PC-9 (cell line): ENCODE measurements at regions of chr22 and their contacts with region 1.

Region 1: GRCh38 chr22:28992565-28993356 is 68.9 kb downstream of the C22orf31 start:
- DNase-seq: no peak
- H3K4me3 ChIP-seq: no peak overlapping the region
- H3K27ac ChIP-seq: no peak overlapping the region
- H3K4me1 ChIP-seq: no peaks in the 10 kb centered on the region
- H3K27me3 ChIP-seq: no peaks in the 10 kb centered on the region
- CTCF ChIP-seq: no peak

Region 2: DNA sequence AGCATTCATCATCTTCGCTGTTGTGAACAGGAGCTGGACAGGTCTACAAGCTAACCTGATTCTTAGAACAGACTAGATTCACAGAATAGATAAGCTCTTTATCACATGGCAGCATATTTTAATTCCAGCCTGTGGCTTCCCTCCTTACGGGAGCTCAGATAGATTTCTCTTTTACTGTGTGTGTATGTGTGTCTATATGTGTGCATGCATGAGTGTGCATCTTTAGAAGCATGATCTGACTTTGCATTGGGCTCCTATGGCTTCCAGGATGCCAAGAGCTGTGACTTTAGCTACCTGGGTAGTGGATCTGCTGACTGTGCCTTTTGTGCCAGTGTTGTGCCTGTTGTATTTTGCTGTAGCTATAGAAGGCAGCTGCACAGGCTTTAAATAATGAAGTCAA is 65.1 kb before region 1 on chr22:
- CTCF ChIA-PET with region 1: interaction called, 12 read pairs
- POLR2A ChIA-PET with region 1: no interaction called
- intact Hi-C with region 1: no loop called
- DNase-seq: no peak
- H3K4me3 ChIP-seq: no peak overlapping the region
- H3K27ac ChIP-seq: no peak overlapping the region
- H3K4me1 ChIP-seq: no peaks in the 10 kb centered on the region
- H3K27me3 ChIP-seq: no peaks in the 10 kb centered on the region
- CTCF ChIP-seq: no peak

Region 3: GRCh38 chr22:28937206-28938025 is 55.3 kb before region 1 on chr22:
- CTCF ChIA-PET with region 1: no interaction called
- POLR2A ChIA-PET with region 1: no interaction called
- intact Hi-C with region 1: loop called (anchors 2 kb)
- DNase-seq: no peak
- H3K4me3 ChIP-seq: no peak overlapping the region
- H3K27ac ChIP-seq: no peak overlapping the region
- H3K4me1 ChIP-seq: no peaks in the 10 kb centered on the region
- H3K27me3 ChIP-seq: no peaks in the 10 kb centered on the region
- CTCF ChIP-seq: no peak

Region 4: DNA sequence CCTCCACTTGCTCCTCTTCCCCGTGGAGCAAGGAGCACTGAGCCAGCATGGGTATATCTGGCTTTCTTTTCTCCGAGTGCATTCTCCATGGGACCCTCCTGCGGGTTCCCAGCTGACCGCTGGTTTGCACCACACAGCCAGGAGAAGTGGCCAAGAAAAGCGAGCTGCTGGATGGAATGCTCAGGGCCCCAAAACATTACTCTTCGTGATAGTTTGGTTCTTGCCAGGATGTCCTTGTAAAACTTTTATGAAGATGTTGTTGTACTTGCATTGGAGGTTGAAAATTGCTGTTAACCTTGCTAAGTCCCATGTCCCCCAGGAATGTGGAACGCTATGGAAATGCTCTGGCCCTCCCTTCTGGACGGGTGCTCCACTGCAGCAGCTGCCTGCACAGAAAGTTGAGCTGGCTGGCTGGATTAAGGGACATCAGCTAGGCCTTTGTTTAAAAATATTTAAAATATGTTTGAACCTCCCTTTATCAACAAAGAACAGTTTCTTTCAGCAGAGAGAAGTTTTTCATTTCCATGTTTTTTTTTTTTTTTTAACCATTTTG is 40.7 kb before region 1 on chr22:
- CTCF ChIA-PET with region 1: no interaction called
- POLR2A ChIA-PET with region 1: no interaction called
- intact Hi-C with region 1: no loop called
- DNase-seq: peak in 1 of 2 experiments; percentile 15
- H3K4me3 ChIP-seq: no peak overlapping the region
- H3K27ac ChIP-seq: no peak overlapping the region
- H3K4me1 ChIP-seq: 0 out of 2 replicates have a peak, but pooled peaks cover 12% of the 10 kb centered on the region
- H3K27me3 ChIP-seq: no peaks in the 10 kb centered on the region
- CTCF ChIP-seq: no peak

Region 5: DNA sequence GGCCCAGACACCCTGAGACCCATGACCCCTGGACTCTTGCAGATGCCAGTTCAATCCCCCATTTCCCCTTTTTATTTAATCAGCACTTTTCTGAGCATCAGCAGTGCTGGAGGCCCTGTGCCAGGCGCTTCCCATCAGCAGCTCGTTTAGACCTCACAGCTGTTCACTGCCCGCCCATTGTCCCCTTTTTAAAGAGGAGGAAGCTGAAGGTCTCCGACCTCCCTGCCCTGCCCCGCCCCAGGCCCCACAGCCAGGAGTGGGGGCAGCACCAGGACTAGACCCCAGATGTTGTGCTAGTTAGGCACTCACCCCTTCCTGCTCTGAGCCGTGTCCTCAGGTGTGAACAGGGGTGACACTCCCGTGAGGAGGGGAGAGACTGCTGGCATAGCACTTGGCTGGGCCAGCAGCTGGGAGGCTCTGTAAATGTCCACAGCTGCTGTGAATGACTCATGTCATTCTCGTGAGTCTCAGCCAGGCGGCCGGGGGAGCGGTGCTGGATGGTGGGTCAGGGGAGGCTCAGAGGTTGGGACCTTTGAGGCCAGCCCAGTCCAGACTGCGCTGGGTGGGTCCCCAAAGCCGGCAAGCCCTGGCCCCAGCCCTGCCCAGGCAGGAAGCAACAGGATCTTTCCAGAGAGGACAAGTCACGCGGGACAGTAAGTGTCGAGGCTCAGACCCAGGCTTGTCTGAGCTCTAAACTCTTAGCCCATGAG is 232.8 kb after region 1 on chr22:
- CTCF ChIA-PET with region 1: no interaction called
- POLR2A ChIA-PET with region 1: no interaction called
- intact Hi-C with region 1: no loop called
- DNase-seq: no peak
- H3K4me3 ChIP-seq: no peak overlapping the region
- H3K27ac ChIP-seq: no peak overlapping the region
- H3K4me1 ChIP-seq: no peaks in the 10 kb centered on the region
- H3K27me3 ChIP-seq: 0 out of 2 replicates have a peak, but pooled peaks cover 7% of the 10 kb centered on the region
- CTCF ChIP-seq: no peak

Region 6: DNA sequence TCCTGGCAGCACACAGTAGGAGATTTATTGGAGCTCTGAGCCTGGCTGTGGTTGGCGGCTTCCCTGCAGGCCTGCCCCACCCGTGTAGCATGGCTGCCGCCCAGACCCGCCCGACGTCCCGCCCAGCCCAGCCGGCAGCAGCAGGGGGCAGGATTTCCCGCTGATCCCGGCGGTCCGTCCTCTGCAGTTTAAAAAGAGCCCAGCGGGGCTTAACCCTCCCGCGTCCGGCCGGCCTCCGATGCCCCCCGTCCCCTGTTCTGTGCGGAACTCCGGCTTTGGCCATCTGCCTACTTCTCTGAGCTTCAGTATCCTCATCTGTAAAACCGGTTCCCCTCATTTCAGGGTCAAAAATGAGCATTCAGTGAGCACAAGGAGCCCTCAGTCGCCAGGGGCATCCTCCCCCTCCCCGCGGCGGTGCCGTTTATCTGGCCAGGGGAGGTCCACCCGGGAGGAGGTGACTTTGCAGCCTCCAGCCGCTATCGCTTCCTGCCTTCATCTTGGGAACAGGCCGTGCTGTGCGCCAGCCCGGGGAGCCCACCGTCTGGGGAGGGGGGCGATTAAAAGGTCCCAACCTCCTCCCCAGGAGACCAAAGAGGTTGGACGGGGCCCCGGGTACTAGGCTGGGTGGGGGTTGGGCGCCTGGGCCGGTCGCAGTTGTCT is 313.5 kb after region 1 on chr22 and contains the start of gene GAS2L1:
- CTCF ChIA-PET with region 1: no interaction called
- POLR2A ChIA-PET with region 1: no interaction called
- intact Hi-C with region 1: no loop called
- DNase-seq: peak; percentile 66 to 78
- H3K4me3 ChIP-seq: peak within 1 kb of the TSS; percentile 75
- H3K27ac ChIP-seq: no peak within 1 kb of the TSS
- H3K4me1 ChIP-seq: peaks cover 26% of the 10 kb centered on the region
- H3K27me3 ChIP-seq: no peaks in the 10 kb centered on the region
- CTCF ChIP-seq: peak; percentile 57
- total RNA-seq, gene GAS2L1: 15.2 and 16.6 TPM in 2 replicates

Region 7: DNA sequence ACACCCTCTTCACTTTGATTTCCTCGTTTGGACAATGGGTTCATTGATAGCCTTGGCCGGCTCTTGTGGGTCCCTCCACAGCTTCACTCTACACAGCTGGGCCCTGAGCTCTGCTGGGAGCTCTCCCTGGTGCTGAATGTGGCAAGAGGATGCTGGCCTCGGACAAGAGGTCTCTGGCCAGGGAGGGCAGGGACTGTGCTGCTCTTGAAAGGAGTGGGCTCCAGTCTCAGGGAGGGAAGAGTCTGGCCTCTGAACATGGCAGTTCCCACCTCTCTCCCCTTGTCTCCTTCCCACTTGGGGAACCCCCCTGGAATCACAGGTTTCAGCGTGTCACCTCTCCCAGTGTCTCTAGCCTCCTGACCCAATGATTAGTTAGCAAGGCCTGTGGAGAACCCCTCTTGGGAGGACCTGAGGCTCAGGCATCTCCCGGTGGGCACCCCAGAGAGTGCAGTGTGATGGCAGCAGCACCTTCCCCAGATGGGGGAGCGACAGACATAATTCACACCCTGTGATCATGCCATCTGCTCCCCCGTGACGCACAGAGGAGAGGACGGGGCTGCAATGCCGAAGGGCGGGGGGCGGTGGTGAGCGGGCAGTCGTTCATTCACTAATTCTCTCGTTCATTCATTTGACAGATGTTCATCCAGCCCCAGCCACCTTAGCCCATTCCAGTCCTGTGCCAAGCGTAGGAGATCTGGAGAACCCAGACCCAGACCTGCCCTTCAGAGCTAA is 724.2 kb after region 1 on chr22:
- CTCF ChIA-PET with region 1: no interaction called
- POLR2A ChIA-PET with region 1: no interaction called
- intact Hi-C with region 1: no loop called
- DNase-seq: peak; percentile 54 to 55
- H3K4me3 ChIP-seq: no peak overlapping the region
- H3K27ac ChIP-seq: no peak overlapping the region
- H3K4me1 ChIP-seq: no peaks in the 10 kb centered on the region
- H3K27me3 ChIP-seq: peaks cover 20% of the 10 kb centered on the region
- CTCF ChIP-seq: no peak